Heart left ventricle (tissue), 16 donors: ENCODE measurements at regions of chr2 and their contacts with region 1.

Region 1: GRCh38 chr2:78476619-78477229 is 548.8 kb upstream of the REG3G start:
- DNase-seq: no peak
- ATAC-seq: no peak
- H3K4me3 ChIP-seq: no peak overlapping the region
- H3K27ac ChIP-seq: no peak overlapping the region
- H3K4me1 ChIP-seq: no peaks in the 10 kb centered on the region
- H3K27me3 ChIP-seq: no peaks in the 10 kb centered on the region
- CTCF ChIP-seq: no peak
- POLR2A ChIP-seq: no peak

Region 2: GRCh38 chr2:78330193-78330592 is 146.5 kb before region 1 on chr2:
- intact Hi-C with region 1: no loop called
- DNase-seq: no peak
- ATAC-seq: no peak
- H3K4me3 ChIP-seq: no peak overlapping the region
- H3K27ac ChIP-seq: no peak overlapping the region
- H3K4me1 ChIP-seq: no peaks in the 10 kb centered on the region
- H3K27me3 ChIP-seq: no peaks in the 10 kb centered on the region
- CTCF ChIP-seq: no peak
- POLR2A ChIP-seq: no peak

Region 3: DNA sequence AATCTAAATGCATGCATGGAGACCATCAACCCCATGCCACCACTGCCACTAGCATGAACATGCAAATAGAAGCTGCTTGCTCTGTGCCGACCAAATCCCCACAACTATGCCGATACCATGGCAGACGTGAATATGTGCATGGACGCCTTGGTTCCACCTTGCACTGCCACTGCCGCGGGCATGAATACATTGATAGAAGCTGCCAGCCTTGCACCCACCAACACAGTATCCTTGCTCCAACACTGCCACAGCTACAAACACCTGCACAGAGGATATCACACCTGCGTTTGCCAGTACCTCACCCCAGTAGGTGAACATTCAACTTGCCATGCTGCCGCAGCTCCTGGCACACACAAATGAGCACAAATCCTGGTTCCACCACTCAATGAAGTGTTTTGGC is 21.4 kb after region 1 on chr2:
- intact Hi-C with region 1: loop called in 1 of 10 experiments (anchors 2 kb)
- DNase-seq: no peak
- ATAC-seq: no peak
- H3K4me3 ChIP-seq: no peak overlapping the region
- H3K27ac ChIP-seq: no peak overlapping the region
- H3K4me1 ChIP-seq: no peaks in the 10 kb centered on the region
- H3K27me3 ChIP-seq: no peaks in the 10 kb centered on the region
- CTCF ChIP-seq: no peak
- POLR2A ChIP-seq: no peak

Region 4: GRCh38 chr2:78541451-78542267 is 64.9 kb after region 1 on chr2:
- intact Hi-C with region 1: no loop called
- DNase-seq: no peak
- ATAC-seq: no peak
- H3K4me3 ChIP-seq: no peak overlapping the region
- H3K27ac ChIP-seq: no peak overlapping the region
- H3K4me1 ChIP-seq: no peaks in the 10 kb centered on the region
- H3K27me3 ChIP-seq: no peaks in the 10 kb centered on the region
- CTCF ChIP-seq: no peak
- POLR2A ChIP-seq: no peak